ENCODE measurements at regions of chr11 and their contacts with region 1.

Region 1: DNA sequence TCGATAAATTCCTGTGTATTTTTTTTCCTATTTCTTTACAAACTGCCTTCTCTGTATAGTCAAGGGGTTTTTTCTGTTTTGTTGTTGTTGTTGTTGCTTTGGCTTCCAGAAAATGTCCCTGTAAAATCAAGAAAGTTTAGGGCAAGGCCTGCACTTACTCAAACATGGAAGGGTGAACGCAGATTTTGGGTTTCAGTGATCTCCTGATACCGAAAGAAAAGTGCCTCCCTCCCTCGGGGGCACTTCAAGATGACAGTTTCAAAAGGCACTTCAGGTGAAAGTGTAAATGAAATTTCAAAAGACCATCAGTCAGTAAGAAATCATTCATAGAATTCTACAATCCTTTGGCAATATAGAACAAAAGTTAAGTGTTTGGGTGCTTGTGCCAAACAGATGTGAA is 43.4 kb upstream of the TMPRSS4 start:
- DNase-seq: no peak
- H3K4me3 Mint-ChIP-seq: peak overlapping the region; percentile 7
- H3K27ac Mint-ChIP-seq: peak overlapping the region; percentile 85
- H3K4me1 Mint-ChIP-seq: peaks cover 56% of the 10 kb centered on the region
- H3K27me3 Mint-ChIP-seq: no peaks in the 10 kb centered on the region

Region 2: DNA sequence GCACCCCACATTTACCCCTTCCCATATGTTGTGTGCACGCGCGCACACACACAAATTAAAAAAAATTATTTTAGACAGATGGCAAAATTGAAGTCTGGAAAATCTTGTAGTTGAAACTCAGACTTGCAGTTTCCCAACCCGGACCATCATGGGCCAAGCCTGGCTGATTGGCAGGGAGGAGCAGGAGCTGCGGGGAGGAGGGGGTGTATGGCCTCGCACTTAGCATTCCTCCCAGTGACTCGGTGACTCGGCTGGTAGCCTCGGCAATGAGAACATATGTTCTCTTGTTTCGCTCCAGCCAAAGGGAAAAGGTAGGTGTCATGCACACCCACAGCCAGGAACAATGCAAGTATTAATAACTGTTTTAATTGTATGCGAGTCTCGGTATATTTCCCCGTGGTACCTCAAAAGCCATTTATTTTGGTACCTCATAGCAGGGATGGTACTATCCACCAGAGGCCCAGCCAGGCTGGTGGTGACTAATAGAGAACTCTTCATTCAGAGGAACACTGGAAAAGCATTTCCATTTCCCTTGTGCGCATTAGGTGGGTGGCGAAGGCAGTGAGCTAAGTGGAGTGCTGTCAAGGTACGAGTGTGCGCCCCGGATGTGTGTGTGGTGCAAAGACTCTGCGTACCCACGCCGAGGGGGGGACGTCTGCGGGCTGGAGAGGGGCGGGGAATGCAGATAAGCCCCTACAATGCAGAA is 328.9 kb before region 1 on chr11:
- intact Hi-C with region 1: no loop called
- DNase-seq: no peak
- H3K4me3 Mint-ChIP-seq: no peak overlapping the region
- H3K27ac Mint-ChIP-seq: no peak overlapping the region
- H3K4me1 Mint-ChIP-seq: peaks cover 4% of the 10 kb centered on the region
- H3K27me3 Mint-ChIP-seq: peaks cover 14% of the 10 kb centered on the region

Region 3: DNA sequence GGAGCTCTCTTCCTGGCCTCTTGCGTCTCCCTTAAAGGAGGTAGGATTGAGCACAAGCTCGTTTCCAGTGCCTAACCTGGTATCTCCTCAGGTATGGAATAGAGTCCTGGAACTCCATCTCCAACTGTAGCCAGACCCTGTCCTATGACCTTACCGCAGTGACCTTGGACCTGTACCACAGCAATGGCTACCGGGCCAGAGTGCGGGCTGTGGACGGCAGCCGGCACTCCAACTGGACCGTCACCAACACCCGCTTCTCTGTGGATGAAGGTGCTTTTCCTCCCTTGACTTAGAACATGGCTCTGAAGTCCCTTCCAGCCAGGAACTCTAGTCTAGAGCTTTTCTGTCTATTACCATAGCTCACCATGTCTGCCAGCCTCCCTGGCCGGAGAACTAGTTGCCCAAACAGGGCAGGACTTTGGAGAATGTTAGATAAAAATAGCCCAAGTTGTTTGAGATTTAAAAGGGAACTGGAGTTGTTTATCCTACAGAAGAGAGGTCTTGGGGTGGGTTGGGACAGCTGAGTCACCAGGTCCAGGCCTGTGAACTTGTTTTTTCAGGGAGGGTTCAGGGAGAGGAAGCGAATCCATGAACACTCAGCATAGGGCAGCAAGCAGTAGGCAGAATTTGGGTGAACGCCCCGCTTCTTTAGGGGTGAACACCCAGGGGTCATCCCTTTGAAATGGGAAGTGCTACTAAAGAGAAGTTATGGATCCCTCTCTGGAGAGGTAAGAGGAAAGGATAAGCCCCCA is 43.9 kb before region 1 on chr11:
- intact Hi-C with region 1: no loop called
- DNase-seq: no peak
- H3K4me3 Mint-ChIP-seq: peak overlapping the region; percentile 87
- H3K27ac Mint-ChIP-seq: peak overlapping the region; percentile 54
- H3K4me1 Mint-ChIP-seq: peaks cover 62% of the 10 kb centered on the region
- H3K27me3 Mint-ChIP-seq: no peaks in the 10 kb centered on the region

Region 4: DNA sequence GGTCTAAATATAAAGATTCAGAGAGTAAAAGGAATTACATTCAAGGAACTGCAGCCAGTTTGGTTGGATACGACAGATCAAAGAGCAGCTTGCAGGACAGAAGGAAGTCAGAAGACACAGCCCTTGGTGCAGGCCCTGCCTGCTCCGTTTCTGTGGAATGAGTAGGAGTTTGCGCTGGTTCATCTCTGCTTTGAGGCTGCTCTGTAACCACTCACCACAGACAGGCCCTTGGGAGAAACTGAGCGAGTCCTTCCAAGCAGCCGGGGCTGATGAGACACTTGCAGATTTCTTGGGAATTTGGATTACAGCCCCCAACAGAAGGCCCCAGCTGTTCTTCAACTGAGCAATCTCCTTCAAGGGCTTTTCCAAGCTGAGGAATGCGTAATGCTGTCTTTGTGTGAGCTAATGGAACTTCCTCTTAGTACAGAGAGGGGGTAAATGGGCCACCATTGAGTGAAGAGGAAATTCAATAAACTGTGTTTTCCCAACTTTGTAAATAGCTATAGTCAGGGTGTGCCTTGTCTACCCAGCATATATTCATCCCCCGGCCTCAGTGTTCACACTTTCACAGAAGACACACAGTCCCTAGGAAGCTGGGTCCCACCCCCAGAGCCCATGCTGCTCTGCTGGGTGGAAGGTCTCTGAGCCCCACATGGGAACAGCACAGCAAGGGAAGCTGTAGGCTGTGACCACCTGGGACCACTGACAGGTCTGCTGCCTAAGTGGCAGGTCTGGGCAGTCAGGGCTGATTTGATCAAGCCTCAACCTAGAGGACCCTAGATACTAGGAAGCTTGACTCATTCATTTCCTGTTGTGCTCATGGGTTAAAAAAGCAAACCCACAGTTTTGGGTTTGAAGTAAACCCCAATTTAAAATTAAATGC is 30.7 kb before region 1 on chr11:
- intact Hi-C with region 1: loop called (anchors 2 kb)
- DNase-seq: peak; percentile 61
- H3K4me3 Mint-ChIP-seq: peak overlapping the region; percentile 54
- H3K27ac Mint-ChIP-seq: peak overlapping the region; percentile 99
- H3K4me1 Mint-ChIP-seq: peaks cover 85% of the 10 kb centered on the region
- H3K27me3 Mint-ChIP-seq: no peaks in the 10 kb centered on the region

Region 5: DNA sequence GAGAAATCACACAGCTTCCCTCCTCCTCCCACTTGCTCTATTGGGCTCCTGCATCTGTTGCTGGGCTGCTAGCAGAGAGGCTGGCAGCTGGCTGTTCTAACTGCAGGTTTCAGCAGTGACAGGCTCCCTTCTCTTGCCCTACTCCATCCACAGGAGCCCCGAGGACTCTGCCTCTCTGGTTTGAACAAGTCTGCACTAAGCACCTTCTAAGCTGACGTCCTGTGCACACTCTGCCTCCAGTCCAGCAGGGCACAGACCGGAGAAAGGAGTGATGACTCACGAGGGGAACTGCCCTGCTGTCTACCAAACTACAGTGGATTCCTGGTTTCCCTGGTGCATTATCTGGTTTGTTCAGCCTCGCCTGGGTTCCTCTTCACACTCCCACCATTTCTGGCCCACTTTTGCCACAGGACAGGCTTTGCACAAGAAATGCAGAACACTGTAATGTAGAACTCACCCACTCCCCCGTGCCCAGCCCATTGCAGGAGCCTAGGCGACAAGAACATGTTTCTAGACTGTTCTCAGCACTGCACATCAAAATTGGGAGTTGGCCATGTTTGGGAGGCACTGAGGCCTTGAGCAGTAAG is 21.3 kb before region 1 on chr11:
- intact Hi-C with region 1: loop called (anchors 1 kb)
- DNase-seq: no peak
- H3K4me3 Mint-ChIP-seq: no peak overlapping the region
- H3K27ac Mint-ChIP-seq: peak overlapping the region; percentile 63
- H3K4me1 Mint-ChIP-seq: peaks cover 80% of the 10 kb centered on the region
- H3K27me3 Mint-ChIP-seq: no peaks in the 10 kb centered on the region

Measured in activated T-helper 2 cell treated with anti-CD3 and anti-CD28 coated beads, Interferon-gamma antibody, Interleukin-2, Interleukin-4, amounts not matched to agents 10 μg/mL and 5 μg/mL and 100 μg/mL, durations not matched to agents 14 hours and 24 hours and 36 hours (primary cell).